ENCODE measurements at regions of chr18 and their contacts with region 1.

Region 1: DNA sequence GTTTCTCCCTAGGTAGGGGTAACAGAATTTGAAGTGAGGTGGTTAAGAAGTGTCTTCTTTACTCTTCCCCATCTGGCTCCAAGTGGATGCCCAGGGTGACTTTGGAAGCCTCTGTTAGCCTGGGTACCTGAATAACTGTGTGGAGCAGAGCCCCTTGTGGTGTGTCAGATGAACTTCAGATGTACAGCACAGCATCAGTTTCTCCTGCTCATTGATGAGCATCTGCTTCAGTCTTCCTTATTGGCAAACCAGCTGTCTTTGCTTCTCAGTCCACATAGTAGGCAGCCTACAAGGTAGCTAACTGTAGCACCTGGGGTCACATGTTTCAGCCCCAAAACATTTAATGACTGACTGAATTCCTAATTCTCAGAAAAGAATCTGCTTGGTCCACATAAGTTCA is 56.2 kb upstream of the ATP8B1 start:
- H3K4me3 ChIP-seq: no peak overlapping the region
- H3K27ac ChIP-seq: no peak overlapping the region
- H3K4me1 ChIP-seq: no peaks in the 10 kb centered on the region
- CTCF ChIP-seq: no peak

Region 2: GRCh38 chr18:57793302-57793997 is 65.9 kb before region 1 on chr18:
- CTCF ChIA-PET with region 1: interaction called, 11 read pairs
- POLR2A ChIA-PET with region 1: no interaction called
- H3K4me3 ChIP-seq: no peak overlapping the region
- H3K27ac ChIP-seq: no peak overlapping the region
- H3K4me1 ChIP-seq: peaks cover 31% of the 10 kb centered on the region
- CTCF ChIP-seq: no peak

Region 3: DNA sequence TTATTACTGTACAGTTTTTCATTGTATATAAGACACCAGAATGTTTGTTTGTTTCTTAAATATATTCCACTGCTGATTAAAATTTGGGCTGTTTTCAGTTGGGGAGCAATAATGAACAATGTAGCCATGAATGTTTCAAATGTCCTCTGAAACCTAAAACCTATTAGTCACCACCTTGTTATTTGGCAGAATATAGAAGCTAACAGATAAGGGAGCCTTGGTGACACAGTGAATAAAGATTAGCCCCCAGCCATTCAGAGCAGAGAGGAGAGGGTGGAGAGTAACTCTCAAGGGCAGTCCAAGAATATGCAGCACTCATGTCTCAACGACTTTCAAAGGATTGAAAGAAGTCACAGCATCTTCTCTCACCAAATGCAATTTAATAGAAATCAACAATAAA is 13.1 kb before region 1 on chr18:
- CTCF ChIA-PET with region 1: interaction called, 11 read pairs
- POLR2A ChIA-PET with region 1: no interaction called
- H3K4me3 ChIP-seq: no peak overlapping the region
- H3K27ac ChIP-seq: 0 out of 2 replicates have a peak overlapping the region, but pooled peaks have one; percentile 49
- H3K4me1 ChIP-seq: peaks cover 8% of the 10 kb centered on the region
- CTCF ChIP-seq: no peak

Region 4: DNA sequence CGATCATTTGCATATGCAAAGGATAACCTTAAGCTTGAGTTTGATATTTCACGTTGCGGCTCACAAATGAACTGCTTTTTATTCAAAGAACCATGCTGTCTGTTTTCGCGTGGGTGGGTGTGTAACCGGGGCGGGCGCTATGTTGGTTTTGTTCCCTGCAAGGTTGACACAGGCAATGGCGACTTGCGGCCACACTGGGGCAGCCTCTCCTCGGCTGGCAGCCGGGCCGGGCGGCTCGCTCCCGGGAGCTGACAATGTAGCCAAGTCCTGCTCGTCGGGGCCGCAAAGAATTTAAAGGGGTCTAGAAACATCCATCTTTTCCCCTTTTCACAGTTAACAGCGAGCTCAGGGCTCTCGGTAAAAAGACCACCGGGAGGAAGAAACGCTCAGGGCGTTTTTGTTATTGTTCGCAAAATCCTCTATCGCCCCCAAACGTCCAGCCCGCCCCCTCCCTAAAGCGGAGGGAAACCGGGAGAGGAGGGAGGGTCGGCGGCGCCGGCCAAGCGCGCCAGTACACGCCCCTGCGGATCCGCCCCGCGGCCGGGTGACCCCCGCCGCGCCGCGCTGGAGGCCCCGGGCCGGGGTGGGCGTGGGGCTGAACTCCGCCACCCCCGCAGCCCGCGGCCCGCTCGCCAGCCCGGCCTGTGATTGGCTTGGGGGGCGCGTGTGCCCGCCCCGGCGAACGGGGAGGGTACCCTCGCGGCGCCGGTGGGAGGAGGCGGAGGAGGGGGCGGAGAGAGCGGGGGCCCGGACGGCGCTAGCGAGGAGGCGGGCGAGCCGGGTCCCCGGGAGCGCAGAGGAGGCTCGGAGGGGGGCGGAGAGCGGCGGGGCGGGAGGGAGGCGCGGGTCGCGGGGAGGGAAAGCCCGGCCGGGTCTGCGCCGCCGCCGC is 184.4 kb after region 1 on chr18 and contains the start of gene NEDD4L:
- CTCF ChIA-PET with region 1: no interaction called
- POLR2A ChIA-PET with region 1: no interaction called
- H3K4me3 ChIP-seq: peak within 1 kb of the TSS; percentile 81
- H3K27ac ChIP-seq: peak within 1 kb of the TSS; percentile 95
- H3K4me1 ChIP-seq: peaks cover 17% of the 10 kb centered on the region
- CTCF ChIP-seq: peak; percentile 86

Region 5: DNA sequence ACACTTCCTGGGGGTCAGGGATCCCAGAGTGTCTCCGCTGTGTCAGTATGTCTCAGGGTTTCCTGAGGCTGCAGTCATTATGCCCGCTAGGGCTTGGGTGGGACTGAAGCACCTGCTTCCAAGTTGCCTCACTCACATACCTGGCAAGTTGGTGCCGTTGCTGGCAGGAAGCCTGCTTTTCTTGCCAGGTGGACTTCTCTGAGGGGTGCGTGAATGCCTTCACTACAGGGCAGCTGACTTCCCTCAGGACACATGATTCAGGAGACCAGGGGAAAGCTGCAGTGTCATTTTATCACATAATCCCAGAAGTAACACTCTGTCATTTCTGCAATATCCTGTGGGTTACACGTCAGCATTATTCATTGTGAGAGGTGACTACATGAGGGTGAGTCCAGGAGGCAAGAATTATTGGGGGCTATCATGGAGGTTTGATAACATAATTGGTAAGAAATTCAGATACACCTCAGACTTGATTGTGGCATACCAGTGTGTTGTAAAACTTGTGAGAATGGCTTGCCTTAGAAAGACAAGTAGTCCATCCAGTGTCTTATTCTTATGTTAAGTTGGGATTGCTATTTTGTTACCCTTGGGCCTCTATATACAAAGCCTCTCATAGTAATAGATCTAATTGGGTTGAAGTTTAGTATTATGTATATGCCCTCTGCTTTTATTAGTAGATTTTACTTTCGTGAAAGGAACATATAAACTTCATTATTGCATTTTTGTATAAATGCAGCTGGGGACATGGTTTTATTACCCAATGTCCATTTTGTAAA is 228.8 kb after region 1 on chr18:
- CTCF ChIA-PET with region 1: no interaction called
- POLR2A ChIA-PET with region 1: no interaction called
- H3K4me3 ChIP-seq: no peak overlapping the region
- H3K27ac ChIP-seq: no peak overlapping the region
- H3K4me1 ChIP-seq: no peaks in the 10 kb centered on the region
- CTCF ChIP-seq: no peak

Measured in HEK293 (cell line).